Activated CD4-positive, alpha-beta memory T cell treated with anti-CD3 and anti-CD28 coated beads, Interleukin-2, amount 10 ng/mL, durations not matched to agents 7 days and 5 days (primary cell): ENCODE measurements at regions of chr2 and their contacts with region 1.

Region 1: GRCh38 chr2:143252138-143252907 is 123.1 kb downstream of the ARHGAP15 start:
- DNase-seq: no peak
- H3K4me3 Mint-ChIP-seq: peak overlapping the region; percentile 31
- H3K27ac Mint-ChIP-seq: peak overlapping the region; percentile 80
- H3K4me1 Mint-ChIP-seq: peaks cover 73% of the 10 kb centered on the region
- H3K27me3 Mint-ChIP-seq: no peaks in the 10 kb centered on the region

Region 2: DNA sequence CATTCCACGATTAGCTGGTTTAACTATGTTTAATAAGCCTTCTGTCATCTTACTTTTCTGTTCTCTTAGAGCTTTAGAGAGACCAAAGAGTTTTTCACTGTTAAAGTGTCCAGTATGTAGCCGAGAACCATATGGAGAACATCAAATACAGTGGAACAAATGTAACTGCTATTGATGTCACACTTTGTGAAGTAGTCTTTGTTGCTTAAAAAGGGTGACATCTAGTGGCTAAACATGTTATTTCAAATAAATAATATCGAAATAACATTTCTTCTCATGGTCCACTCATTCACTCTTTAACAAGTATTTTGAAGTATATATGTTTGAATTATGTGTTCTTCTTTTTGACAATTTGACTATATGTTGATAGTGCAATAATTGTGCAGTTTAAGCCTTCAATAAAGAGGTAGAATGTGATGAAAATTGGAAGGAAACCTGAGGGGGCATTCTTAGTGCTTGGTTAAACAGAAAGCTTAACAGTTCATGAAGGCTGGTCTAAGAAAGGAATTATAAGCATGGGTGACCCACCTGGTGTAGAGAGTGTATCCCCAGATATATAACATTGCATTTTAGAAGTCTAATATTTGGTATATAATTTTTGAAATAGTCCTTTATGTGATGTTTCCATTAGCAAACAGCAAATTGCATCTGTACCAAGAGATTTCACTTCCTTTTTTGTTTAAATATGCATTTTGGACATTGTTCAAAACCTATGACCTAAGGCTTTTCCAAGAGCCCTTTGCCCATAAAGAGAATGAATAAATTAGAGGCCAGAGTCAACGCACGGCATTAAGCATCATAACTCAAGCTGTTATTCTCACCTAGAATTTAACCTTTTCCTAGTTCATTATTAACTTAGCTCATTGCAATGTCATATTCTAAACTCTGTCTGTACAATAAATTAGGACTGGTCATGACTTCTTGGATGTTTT is 262.8 kb before region 1 on chr2:
- CTCF ChIA-PET with region 1: no interaction called
- POLR2A ChIA-PET with region 1: no interaction called
- DNase-seq: no peak
- H3K4me3 Mint-ChIP-seq: no peak overlapping the region
- H3K27ac Mint-ChIP-seq: no peak overlapping the region
- H3K4me1 Mint-ChIP-seq: no peaks in the 10 kb centered on the region
- H3K27me3 Mint-ChIP-seq: peaks cover 20% of the 10 kb centered on the region

Region 3: GRCh38 chr2:143150287-143150686 is 102.0 kb before region 1 on chr2:
- CTCF ChIA-PET with region 1: no interaction called
- POLR2A ChIA-PET with region 1: no interaction called
- DNase-seq: no peak
- H3K4me3 Mint-ChIP-seq: no peak overlapping the region
- H3K27ac Mint-ChIP-seq: no peak overlapping the region
- H3K4me1 Mint-ChIP-seq: peaks cover 70% of the 10 kb centered on the region
- H3K27me3 Mint-ChIP-seq: no peaks in the 10 kb centered on the region

Region 4: GRCh38 chr2:143205106-143205764 is 47.1 kb before region 1 on chr2:
- CTCF ChIA-PET with region 1: interaction called, 47 read pairs
- POLR2A ChIA-PET with region 1: interaction called, 22 read pairs
- DNase-seq: peak; percentile 16
- H3K4me3 Mint-ChIP-seq: no peak overlapping the region
- H3K27ac Mint-ChIP-seq: peak overlapping the region; percentile 72
- H3K4me1 Mint-ChIP-seq: peaks cover 47% of the 10 kb centered on the region
- H3K27me3 Mint-ChIP-seq: no peaks in the 10 kb centered on the region